GM10248 (cell line): ENCODE measurements at regions of chr7 and their contacts with region 1.

Region 1: DNA sequence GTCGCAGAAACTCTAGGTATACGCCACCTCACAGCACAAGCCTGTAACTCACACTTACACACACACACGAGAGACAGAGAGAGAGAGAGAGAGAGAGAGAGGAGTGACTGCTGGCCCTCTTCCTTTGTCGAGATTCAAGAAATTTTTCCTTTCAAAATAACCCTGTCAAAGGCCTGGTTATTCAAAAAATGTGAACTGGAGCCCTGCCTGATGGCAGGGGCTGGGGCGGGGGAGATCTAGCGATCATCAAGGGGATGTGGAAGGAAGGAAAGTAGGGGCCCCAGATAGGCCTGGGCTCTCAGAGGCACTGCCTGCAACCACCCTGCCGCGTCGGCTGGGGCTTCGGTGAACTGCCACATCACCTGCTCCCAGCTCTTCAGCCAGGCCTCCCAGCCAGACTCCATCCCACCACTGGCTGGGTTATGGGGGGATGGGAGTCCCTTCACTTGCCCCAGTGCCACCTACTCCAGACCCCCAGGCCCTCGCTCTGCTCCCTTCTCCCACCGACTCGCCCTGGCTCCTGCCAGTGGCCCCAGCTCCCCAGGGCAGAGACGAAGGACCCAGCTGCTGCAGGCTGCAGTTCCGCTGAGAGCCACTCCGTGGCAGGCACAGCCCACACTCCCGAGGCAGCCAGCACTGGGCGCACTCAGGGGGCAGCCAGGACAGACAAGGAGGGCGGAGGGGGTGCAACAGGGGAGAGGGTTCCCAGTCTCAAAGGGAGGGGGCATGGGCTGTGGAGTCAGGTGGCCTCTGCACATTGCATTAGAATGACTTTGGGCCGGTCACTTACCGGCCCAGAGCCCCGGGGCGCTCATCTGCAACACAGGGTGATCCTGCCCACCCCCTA is 15.3 kb downstream of the KCNH2 start:
- DNase-seq: peak; percentile 87
- CTCF ChIP-seq: peak; percentile 99

Region 2: GRCh38 chr7:150876817-150877526 is 85.8 kb before region 1 on chr7:
- CTCF ChIA-PET with region 1: no interaction called
- POLR2A ChIA-PET with region 1: no interaction called
- DNase-seq: peak; percentile 74
- CTCF ChIP-seq: peak; percentile 39

Region 3: GRCh38 chr7:150974468-150975391 is 12.0 kb after region 1 on chr7:
- CTCF ChIA-PET with region 1: interaction called, 13 read pairs
- POLR2A ChIA-PET with region 1: no interaction called
- DNase-seq: peak; percentile 74
- CTCF ChIP-seq: peak; percentile 55

Region 4: GRCh38 chr7:150994141-150994964 is 31.6 kb after region 1 on chr7:
- CTCF ChIA-PET with region 1: interaction called, 11 read pairs
- POLR2A ChIA-PET with region 1: no interaction called
- DNase-seq: no peak
- CTCF ChIP-seq: no peak

Region 5: GRCh38 chr7:151017953-151018420 is 55.2 kb after region 1 on chr7:
- CTCF ChIA-PET with region 1: interaction called, 27 read pairs
- POLR2A ChIA-PET with region 1: no interaction called
- DNase-seq: peak; percentile 83
- CTCF ChIP-seq: peak; percentile 95

Region 6: GRCh38 chr7:151057989-151058780 is 95.4 kb after region 1 on chr7:
- CTCF ChIA-PET with region 1: no interaction called
- POLR2A ChIA-PET with region 1: no interaction called
- DNase-seq: peak; percentile 99
- CTCF ChIP-seq: no peak